ENCODE measurements at regions of chr12 and their contacts with region 1.

Region 1: DNA sequence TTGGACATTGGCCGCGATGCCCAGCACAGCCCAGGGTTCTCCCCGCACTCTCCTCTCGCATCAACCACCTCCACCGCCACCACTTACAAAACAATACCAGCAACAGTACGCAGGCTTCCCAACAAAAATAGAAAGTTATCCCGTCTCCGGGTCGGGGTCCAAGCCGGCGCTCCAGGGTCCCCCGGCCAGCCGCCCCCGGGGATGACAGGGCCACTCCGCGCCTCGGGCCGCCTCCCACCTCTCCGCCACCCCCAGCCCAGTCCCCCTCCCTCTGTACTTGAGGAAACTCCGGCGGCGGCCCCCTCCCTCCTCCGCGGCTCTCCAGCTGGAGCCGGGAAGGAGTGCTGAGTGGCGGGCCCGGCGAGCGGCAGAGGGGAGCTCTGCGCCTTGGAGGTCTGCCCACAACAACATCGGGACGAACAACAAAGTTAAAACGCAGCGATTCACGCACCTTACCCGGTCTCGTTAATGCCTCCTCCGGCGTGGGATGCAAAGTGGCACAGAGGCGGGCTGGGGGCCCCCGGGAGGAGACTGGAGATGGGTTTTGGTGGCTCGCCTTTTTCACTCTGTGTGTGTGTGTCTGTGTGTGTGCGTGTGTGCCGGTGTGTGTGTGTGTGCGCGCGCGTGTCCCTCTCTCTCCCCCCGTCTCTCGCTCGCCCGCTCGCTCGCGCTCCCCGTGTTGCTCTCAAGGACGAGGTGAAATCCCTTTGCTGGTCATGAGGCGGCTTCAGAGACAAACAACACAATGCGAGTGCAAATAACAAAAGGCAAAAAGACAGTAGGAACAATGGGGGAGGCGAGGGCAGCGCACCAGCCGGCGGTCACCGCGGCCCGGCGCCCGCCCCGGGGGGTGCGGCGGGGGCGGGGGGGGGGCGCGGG is 386.8 kb downstream of the BCAT1 start:
- DNase-seq: peak in 1 of 3 donors; percentile 21
- H3K4me3 ChIP-seq: peak overlapping the region; percentile 56 to 89 (median 77)
- H3K4me3 Mint-ChIP-seq: peak overlapping the region; percentile 88 to 98
- H3K27ac ChIP-seq: no peak overlapping the region
- H3K27ac Mint-ChIP-seq: peak overlapping the region in 1 of 7 donors; percentile 58
- H3K4me1 ChIP-seq: peaks cover 14 to 18% of the 10 kb centered on the region in 2 donors
- H3K4me1 Mint-ChIP-seq: peaks cover 27% of the 10 kb centered on the region
- H3K27me3 ChIP-seq: peaks cover 47 to 68% of the 10 kb centered on the region in 2 donors
- H3K27me3 Mint-ChIP-seq: peaks cover 44 to 75% (median 60%) of the 10 kb centered on the region in 3 donors
- CTCF ChIP-seq: no peak

Region 2: DNA sequence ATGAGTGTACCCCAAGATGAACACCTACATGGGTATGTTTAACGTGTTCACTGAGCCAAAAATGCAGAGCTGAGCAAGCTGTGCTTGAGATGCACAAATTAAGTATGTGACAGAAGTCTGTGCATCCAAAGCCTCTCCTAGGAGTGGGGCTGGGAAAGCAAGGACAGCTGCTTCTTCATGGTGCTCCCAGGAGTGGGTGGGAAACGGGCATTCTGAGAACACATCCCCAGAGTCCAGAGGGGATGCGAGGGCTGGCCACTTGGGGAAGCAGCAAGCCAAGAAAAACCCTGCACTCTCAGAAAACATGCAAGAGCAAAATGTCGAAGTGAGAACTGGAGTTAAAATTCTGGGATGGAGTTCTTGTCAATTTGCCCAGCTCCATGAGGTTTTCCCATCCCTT is 27.5 kb before region 1 on chr12:
- intact Hi-C with region 1: no loop called
- DNase-seq: no peak
- H3K4me3 ChIP-seq: no peak overlapping the region
- H3K4me3 Mint-ChIP-seq: no peak overlapping the region
- H3K27ac ChIP-seq: no peak overlapping the region
- H3K27ac Mint-ChIP-seq: no peak overlapping the region
- H3K4me1 ChIP-seq: no peaks in the 10 kb centered on the region
- H3K4me1 Mint-ChIP-seq: no peaks in the 10 kb centered on the region
- H3K27me3 ChIP-seq: no peaks in the 10 kb centered on the region
- H3K27me3 Mint-ChIP-seq: no peaks in the 10 kb centered on the region
- CTCF ChIP-seq: no peak

Region 3: GRCh38 chr12:24705741-24706358 is 143.7 kb after region 1 on chr12:
- intact Hi-C with region 1: no loop called
- DNase-seq: peak; percentile 39 to 84 (median 77)
- H3K4me3 ChIP-seq: peak overlapping the region in 1 of 3 experiments; percentile 31
- H3K4me3 Mint-ChIP-seq: peak overlapping the region in 1 of 2 donors; percentile 67
- H3K27ac ChIP-seq: peak overlapping the region in 1 of 2 donors; percentile 3
- H3K27ac Mint-ChIP-seq: peak overlapping the region; percentile 75 to 88 (median 83)
- H3K4me1 ChIP-seq: peaks cover 13 to 21% of the 10 kb centered on the region in 2 donors
- H3K4me1 Mint-ChIP-seq: peaks cover 18% of the 10 kb centered on the region
- H3K27me3 ChIP-seq: no peaks in the 10 kb centered on the region
- H3K27me3 Mint-ChIP-seq: peaks cover 0 to 2% (median 0%) of the 10 kb centered on the region in 3 donors
- CTCF ChIP-seq: no peak

Region 4: GRCh38 chr12:24728366-24728765 is 166.2 kb after region 1 on chr12:
- intact Hi-C with region 1: loop called in 1 of 2 experiments (anchors 10 kb)
- DNase-seq: peak; percentile 18 to 57 (median 42)
- H3K4me3 ChIP-seq: no peak overlapping the region
- H3K4me3 Mint-ChIP-seq: no peak overlapping the region
- H3K27ac ChIP-seq: no peak overlapping the region
- H3K27ac Mint-ChIP-seq: no peak overlapping the region
- H3K4me1 ChIP-seq: no peaks in the 10 kb centered on the region
- H3K4me1 Mint-ChIP-seq: peaks cover 1% of the 10 kb centered on the region
- H3K27me3 ChIP-seq: no peaks in the 10 kb centered on the region
- H3K27me3 Mint-ChIP-seq: peaks cover 0 to 3% (median 2%) of the 10 kb centered on the region in 3 donors
- CTCF ChIP-seq: peak; percentile 86